ENCODE measurements at regions of chr3 and their contacts with region 1.

Region 1: DNA sequence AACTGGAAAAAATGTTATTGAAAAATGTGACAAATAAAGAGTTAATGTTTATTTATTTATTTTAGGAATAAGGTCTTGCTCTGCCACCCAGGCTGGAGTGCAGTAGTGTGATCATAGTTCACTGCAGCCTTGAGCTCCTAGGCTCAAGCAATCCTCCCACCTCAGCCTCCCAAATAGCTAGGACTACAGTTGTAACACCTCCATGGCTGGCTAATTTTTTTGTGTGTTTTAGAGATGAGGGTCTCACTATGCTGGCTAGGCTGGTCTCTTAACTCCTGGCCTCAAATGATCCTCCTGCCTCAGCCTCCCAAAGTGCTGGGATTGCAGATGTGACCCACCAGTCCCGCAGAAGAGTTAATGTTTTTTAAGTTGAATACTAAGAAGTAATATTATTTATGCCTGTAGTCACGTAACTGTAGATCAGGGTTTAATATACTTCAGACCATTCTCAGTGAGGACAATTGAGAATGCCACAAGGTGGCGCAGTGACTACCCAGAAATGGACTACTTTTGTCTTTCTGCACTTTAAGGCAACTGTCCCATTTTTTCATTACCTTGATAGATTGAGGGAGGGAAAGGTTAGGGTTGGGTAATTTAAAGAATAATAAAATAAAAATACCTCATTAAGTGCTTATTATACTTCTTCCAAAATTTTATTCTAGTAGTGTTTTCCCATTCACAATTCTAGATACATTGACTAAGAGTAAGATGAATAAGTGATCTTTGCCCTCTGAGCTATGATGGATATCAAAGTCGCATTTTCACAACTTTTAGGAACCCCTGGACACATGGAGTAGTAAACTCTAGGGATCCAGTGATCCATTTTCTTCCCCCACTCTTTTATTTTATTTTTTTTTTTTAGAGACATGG is 6.0 kb downstream of the MUC13 start:
- DNase-seq: peak; percentile 61
- ATAC-seq: no peak
- H3K4me3 ChIP-seq: no peak overlapping the region
- H3K4me3 Mint-ChIP-seq: no peak overlapping the region
- H3K27ac ChIP-seq: no peak overlapping the region
- H3K27ac Mint-ChIP-seq: no peak overlapping the region
- H3K4me1 ChIP-seq: no peaks in the 10 kb centered on the region
- H3K4me1 Mint-ChIP-seq: no peaks in the 10 kb centered on the region
- H3K27me3 ChIP-seq: peaks cover 0 to 4% (median 2%) of the 10 kb centered on the region in 4 experiments
- H3K27me3 Mint-ChIP-seq: peaks cover 14% of the 10 kb centered on the region
- CTCF ChIP-seq: peak; percentile 80

Region 2: GRCh38 chr3:124938896-124939295 is 10.3 kb after region 1 on chr3:
- CTCF ChIA-PET with region 1: interaction called, 11 read pairs
- POLR2A ChIA-PET with region 1: no interaction called
- intact Hi-C with region 1: no loop called
- DNase-seq: no peak
- ATAC-seq: no peak
- H3K4me3 ChIP-seq: no peak overlapping the region
- H3K4me3 Mint-ChIP-seq: no peak overlapping the region
- H3K27ac ChIP-seq: no peak overlapping the region
- H3K27ac Mint-ChIP-seq: no peak overlapping the region
- H3K4me1 ChIP-seq: peaks cover 0 to 6% of the 10 kb centered on the region in 2 donors
- H3K4me1 Mint-ChIP-seq: peaks cover 3% of the 10 kb centered on the region
- H3K27me3 ChIP-seq: no peaks in the 10 kb centered on the region
- H3K27me3 Mint-ChIP-seq: peaks cover 21% of the 10 kb centered on the region
- CTCF ChIP-seq: no peak

Region 3: DNA sequence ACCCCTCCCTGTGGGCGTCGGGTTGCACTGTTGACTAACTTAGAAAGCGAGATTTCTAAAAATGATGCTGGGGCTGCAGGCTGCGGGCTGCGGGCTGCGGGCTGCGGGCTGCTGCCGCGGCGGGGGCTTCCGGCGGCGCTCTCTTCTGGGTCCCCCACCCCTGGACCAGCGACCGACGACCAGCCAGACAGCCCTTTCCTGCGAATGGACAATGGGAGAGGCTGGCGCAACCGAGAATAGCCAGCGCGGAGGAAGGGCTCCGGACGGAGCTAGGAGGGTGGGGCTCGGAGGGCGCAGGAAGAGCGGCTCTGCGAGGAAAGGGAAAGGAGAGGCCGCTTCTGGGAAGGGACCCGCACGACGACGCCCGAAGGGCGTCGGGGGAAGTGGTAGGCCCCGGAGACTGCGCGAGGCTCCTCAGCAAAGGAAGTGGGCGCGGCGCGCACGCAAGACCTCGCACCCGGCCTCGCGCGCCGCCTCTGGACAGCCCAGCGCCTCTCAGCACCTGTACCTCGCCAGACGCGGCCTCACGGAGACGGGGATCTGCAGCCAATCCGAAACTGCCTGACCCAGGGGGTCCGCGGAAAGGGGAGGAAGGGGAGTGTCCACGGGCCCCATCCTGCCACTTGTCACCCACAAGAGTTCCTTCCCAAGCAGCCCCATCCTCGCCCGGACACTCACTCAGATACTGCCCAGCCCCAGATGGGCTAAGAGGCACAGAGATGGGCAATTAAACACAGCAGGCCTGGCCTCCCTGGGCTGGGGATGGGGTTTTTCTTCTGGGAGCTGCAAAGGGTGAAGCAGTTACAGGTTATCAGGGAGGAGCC is 213.2 kb after region 1 on chr3:
- CTCF ChIA-PET with region 1: no interaction called
- POLR2A ChIA-PET with region 1: no interaction called
- intact Hi-C with region 1: loop called (anchors 5 kb)
- DNase-seq: peak; percentile 76
- ATAC-seq: peak; percentile 90
- H3K4me3 ChIP-seq: peak overlapping the region in 4 of 5 experiments; percentile 33 to 66 (median 54)
- H3K4me3 Mint-ChIP-seq: peak overlapping the region; percentile 85
- H3K27ac ChIP-seq: peak overlapping the region; percentile 42 to 57
- H3K27ac Mint-ChIP-seq: peak overlapping the region; percentile 90
- H3K4me1 ChIP-seq: peaks cover 34 to 76% of the 10 kb centered on the region in 2 donors
- H3K4me1 Mint-ChIP-seq: peaks cover 50% of the 10 kb centered on the region
- H3K27me3 ChIP-seq: no peaks in the 10 kb centered on the region
- H3K27me3 Mint-ChIP-seq: no peaks in the 10 kb centered on the region
- CTCF ChIP-seq: peak; percentile 9

Region 4: DNA sequence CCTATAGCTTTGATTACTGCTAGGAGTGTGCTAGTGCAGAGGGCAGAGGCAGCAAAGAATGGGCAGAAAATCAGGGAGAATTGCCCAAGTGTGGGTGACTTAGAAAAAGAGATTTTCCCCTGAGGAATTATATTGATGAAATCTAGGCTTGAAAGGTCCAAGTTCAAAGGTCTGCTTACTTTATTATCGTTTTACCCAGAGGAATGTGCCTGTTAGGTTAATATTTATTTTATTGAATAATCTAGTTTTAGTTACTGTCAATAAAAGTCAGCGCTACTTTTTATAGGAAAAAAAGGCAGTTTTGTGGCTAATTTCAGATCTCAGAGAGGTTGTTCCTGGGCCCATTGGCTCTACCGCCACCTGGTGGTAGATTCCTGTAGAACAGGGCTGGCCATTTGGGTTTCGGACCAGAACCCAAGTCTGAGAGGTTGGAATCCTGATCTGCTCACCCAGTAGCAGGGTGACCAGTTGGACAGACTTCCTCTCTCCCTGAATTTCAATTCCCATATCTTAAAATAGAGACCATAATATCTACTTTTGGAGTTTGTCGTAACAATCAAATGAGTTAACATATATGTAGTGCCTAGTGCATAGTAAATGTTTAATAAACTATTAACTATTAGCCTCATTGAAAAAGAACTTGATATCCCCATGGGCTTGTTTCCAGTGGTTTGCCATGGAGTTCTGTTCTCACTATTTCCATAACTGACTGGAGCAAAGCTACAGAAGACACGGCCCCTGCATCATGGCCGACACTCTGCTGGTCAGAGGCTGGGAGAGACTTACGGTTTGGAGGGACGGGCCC is 509.3 kb after region 1 on chr3:
- CTCF ChIA-PET with region 1: interaction called, 7 read pairs
- POLR2A ChIA-PET with region 1: no interaction called
- intact Hi-C with region 1: loop called (anchors 1 kb)
- DNase-seq: peak; percentile 67
- ATAC-seq: peak; percentile 45
- H3K4me3 ChIP-seq: no peak overlapping the region
- H3K4me3 Mint-ChIP-seq: no peak overlapping the region
- H3K27ac ChIP-seq: no peak overlapping the region
- H3K27ac Mint-ChIP-seq: no peak overlapping the region
- H3K4me1 ChIP-seq: no peaks in the 10 kb centered on the region
- H3K4me1 Mint-ChIP-seq: no peaks in the 10 kb centered on the region
- H3K27me3 ChIP-seq: no peaks in the 10 kb centered on the region
- H3K27me3 Mint-ChIP-seq: no peaks in the 10 kb centered on the region
- CTCF ChIP-seq: peak; percentile 99

Region 5: DNA sequence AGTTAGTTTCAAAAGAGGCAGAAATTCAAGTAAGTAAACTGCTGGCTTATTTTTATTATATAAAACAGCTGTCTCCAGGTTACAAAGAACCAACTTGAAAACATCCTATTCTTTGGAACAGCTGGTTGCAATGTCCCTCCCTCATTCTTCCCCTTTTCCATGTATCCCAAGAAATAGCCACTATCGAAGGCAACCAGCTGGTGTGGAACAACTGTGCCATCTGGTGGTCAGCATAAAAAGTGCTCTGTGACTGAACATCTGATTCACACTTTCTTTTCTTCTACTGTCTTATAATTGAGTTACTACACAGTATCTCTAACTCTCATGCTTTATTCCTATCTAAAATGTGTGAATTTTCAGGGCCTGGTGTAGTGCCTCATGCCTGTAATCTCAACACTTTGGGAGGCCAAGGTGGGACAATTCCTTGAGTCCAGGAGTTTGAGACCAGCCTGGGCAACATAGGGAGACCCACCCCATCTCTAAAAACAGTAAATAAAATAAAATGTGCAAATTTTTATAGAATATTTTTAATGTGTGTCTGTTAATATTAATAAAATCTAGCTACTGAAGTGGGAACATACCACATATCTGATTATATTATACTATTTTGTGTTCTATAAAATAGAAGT is 657.1 kb after region 1 on chr3:
- CTCF ChIA-PET with region 1: interaction called, 3 read pairs
- POLR2A ChIA-PET with region 1: no interaction called
- intact Hi-C with region 1: loop called (anchors 1 kb)
- DNase-seq: peak; percentile 59
- ATAC-seq: no peak
- H3K4me3 ChIP-seq: no peak overlapping the region
- H3K4me3 Mint-ChIP-seq: no peak overlapping the region
- H3K27ac ChIP-seq: no peak overlapping the region
- H3K27ac Mint-ChIP-seq: no peak overlapping the region
- H3K4me1 ChIP-seq: peaks cover 20 to 23% of the 10 kb centered on the region in 2 donors
- H3K4me1 Mint-ChIP-seq: peaks cover 35% of the 10 kb centered on the region
- H3K27me3 ChIP-seq: no peaks in the 10 kb centered on the region
- H3K27me3 Mint-ChIP-seq: no peaks in the 10 kb centered on the region
- CTCF ChIP-seq: peak; percentile 91

Measured in B cell (primary cell).